ENCODE measurements at regions of chr14 and their contacts with region 1.

Region 1: DNA sequence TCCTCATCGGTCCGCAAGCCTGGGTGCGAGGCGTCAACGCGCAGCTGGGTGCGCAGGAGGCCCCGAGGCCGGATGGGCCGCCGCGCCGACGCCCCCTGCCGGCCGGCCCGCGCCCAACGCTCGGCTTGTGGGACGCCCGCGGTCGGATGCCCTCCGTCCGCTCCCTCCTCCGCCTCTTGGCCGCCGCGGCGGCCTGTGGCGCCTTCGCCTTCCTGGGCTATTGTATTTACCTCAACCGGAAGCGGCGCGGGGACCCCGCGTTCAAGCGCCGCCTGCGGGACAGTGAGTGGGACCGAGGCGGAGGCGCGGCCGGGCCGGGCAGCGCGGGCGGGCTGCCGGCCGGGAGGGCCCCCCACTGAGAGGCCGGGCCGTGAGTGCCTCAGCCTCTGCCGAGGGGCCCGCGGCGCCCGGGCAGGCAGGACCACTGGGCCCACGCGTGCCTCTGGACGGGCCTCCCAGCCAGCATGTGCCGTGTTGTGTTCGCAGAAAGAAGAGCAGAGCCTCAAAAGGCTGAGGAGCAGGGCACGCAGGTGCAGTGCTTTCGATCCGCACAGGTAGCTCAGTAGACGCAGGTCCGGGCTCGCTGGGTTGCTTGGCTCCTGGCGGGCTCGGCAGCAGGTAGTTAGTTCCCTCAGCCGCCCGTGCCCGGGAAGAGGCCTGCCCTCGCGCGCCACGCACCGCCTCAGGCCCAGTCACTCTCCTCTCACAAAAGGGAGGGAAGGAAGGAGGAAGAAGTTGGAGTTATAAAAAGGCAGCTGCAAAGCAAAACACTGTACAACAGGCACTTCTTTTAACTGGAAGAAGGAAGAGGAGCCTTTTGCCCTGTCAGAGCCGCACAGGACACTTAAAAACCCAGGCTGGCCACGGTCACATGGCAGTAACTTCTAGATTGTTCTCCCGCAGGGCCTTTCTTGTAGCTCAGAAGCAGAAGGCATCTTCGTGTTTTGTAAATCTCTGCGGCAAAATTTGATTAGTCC is at the start of gene TOMM20L:
- DNase-seq: peak; percentile 78 to 84
- ATAC-seq: peak; percentile 91 to 92 (median 92)
- H3K4me3 ChIP-seq: peak within 1 kb of the TSS; percentile 67
- H3K4me3 Mint-ChIP-seq: peak within 1 kb of the TSS; percentile 87
- H3K27ac ChIP-seq: peak within 1 kb of the TSS; percentile 81
- H3K27ac Mint-ChIP-seq: peak within 1 kb of the TSS; percentile 77 to 86
- H3K4me1 ChIP-seq: peaks cover 15% of the 10 kb centered on the region
- H3K4me1 Mint-ChIP-seq: peaks cover 5 to 17% of the 10 kb centered on the region in 2 donors
- H3K27me3 ChIP-seq: no peaks in the 10 kb centered on the region
- H3K27me3 Mint-ChIP-seq: no peaks in the 10 kb centered on the region
- CTCF ChIP-seq: peak; percentile 88
- total RNA-seq, gene TOMM20L: 0.66 TPM in 1 of 3 donors, not detected in the others

Region 2: DNA sequence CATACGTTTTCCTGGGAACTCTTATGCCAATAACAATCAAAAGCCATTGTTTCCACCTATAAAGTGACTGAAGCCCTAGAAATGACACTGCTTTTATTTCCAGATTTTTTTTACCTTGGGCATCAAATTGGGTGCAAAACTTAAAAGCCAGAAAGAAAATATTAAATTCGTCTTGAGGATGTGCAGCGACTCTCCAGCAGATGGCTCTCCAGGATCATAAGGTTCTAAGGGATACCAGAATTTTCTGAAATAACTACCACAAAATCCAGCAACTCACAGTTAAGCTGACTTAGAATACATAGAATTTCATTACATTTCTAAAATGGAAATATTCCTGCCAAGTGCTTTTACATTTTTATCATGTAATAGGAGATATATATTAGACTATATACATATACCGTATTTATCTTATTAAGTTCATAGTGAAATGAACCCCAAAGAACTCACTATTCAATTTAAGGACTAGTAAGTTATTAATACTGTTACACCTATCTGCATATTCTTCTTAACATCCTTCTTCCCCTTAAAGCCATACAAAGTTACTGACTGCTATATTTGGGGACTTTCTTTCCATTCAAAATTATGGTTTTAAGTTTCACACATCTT is 288.1 kb before region 1 on chr14:
- intact Hi-C with region 1: loop called (anchors 10 kb)
- DNase-seq: peak in 1 of 2 donors; percentile 70
- ATAC-seq: peak in 2 of 3 donors; percentile 54 to 55
- H3K4me3 ChIP-seq: no peak overlapping the region
- H3K4me3 Mint-ChIP-seq: no peak overlapping the region
- H3K27ac ChIP-seq: no peak overlapping the region
- H3K27ac Mint-ChIP-seq: no peak overlapping the region
- H3K4me1 ChIP-seq: no peaks in the 10 kb centered on the region
- H3K4me1 Mint-ChIP-seq: no peaks in the 10 kb centered on the region
- H3K27me3 ChIP-seq: no peaks in the 10 kb centered on the region
- H3K27me3 Mint-ChIP-seq: peaks cover 10 to 15% of the 10 kb centered on the region in 2 donors
- CTCF ChIP-seq: peak; percentile 62

Region 3: DNA sequence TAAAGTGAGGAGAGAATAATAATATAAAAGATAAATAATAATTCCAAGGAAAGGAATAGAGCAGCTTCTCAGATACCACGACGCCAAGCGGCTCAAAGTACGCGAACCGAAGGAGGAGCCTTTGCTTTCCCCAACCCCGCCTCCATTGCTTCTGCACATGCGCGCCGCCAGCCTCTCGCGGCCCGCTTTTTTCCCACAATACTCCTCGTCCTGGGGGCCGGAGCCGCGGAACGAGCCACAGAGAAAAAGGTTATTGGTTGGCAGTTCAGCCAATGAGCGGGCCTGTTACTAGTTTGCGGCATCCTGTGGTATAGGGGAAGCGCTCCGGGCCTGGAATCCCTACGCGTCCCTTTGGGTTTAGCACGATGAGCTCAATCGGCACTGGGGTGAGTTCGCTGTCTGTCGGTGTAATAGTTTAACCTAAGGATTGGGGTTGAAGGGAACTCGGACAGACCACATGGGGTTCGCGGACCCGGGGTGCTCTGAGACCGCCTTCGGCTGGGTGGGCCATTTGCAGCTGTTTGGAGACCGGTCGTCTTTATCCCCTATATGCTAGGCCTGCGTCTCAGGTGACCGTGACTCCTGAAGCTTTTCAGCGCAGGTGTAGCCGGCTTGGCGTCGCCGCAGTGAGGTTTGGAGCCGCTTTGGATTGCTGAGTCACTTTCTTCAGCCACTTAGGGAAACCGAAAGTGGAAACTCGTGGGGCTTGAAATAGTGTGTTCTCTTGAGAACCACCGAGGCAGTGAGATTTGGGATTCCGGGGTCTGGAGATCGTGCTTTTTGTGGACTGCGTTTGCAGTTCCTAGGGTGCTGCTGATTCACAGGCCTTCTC is 151.3 kb before region 1 on chr14 and contains the start of gene PSMA3:
- intact Hi-C with region 1: loop called (anchors 10 kb)
- DNase-seq: peak; percentile 97 to 98
- ATAC-seq: peak; percentile 88 to 97 (median 92)
- H3K4me3 ChIP-seq: peak within 1 kb of the TSS; percentile 88
- H3K4me3 Mint-ChIP-seq: peak within 1 kb of the TSS; percentile 99
- H3K27ac ChIP-seq: peak within 1 kb of the TSS; percentile 94
- H3K27ac Mint-ChIP-seq: peak within 1 kb of the TSS; percentile 95 to 99
- H3K4me1 ChIP-seq: peaks cover 5% of the 10 kb centered on the region
- H3K4me1 Mint-ChIP-seq: peaks cover 29 to 35% of the 10 kb centered on the region in 2 donors
- H3K27me3 ChIP-seq: no peaks in the 10 kb centered on the region
- H3K27me3 Mint-ChIP-seq: no peaks in the 10 kb centered on the region
- CTCF ChIP-seq: no peak
- total RNA-seq, gene PSMA3: 107 to 120 (median 115) TPM

Region 4: DNA sequence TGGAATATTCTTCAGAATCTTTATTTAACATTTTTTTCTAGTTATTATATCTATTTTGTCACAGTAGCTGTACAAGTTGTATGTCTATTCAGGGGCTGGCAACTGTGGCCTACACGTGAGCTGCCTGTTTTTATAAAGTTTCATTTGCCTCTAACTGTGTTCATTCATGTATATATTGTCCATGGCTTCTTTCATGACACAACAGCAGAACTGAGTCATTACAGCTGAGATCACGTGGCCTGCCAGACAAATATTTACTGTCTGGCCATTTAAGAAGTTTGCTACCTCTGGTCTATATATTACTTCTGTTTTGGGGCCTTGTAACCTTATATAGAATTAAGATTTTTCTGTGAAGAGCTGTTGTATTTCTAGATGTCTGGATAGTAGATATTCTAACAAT is 69.3 kb after region 1 on chr14:
- intact Hi-C with region 1: no loop called
- DNase-seq: no peak
- ATAC-seq: no peak
- H3K4me3 ChIP-seq: no peak overlapping the region
- H3K4me3 Mint-ChIP-seq: no peak overlapping the region
- H3K27ac ChIP-seq: no peak overlapping the region
- H3K27ac Mint-ChIP-seq: no peak overlapping the region
- H3K4me1 ChIP-seq: no peaks in the 10 kb centered on the region
- H3K4me1 Mint-ChIP-seq: no peaks in the 10 kb centered on the region
- H3K27me3 ChIP-seq: no peaks in the 10 kb centered on the region
- H3K27me3 Mint-ChIP-seq: no peaks in the 10 kb centered on the region
- CTCF ChIP-seq: no peak

Region 5: DNA sequence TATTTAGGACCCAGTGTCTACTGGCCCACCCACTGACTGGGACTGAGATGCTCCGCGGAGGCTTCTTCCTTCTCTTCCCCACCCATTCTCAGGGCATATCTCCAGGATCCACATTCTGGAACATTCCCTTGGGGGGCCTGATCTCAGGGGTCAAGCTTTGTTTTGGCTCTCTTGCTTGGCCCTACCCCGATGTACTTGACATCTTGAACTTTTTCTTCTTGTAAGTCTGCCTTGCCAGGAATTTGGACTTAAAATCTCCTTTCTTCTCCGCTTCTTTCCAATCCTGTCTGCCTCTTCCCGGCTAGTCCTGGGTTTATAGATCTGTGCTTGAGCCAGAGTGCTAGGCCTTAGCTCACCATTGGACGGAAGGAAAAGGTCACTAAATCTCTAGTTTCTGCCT is 263.7 kb after region 1 on chr14:
- intact Hi-C with region 1: no loop called
- DNase-seq: no peak
- ATAC-seq: no peak
- H3K4me3 ChIP-seq: no peak overlapping the region
- H3K4me3 Mint-ChIP-seq: no peak overlapping the region
- H3K27ac ChIP-seq: no peak overlapping the region
- H3K27ac Mint-ChIP-seq: no peak overlapping the region
- H3K4me1 ChIP-seq: no peaks in the 10 kb centered on the region
- H3K4me1 Mint-ChIP-seq: no peaks in the 10 kb centered on the region
- H3K27me3 ChIP-seq: no peaks in the 10 kb centered on the region
- H3K27me3 Mint-ChIP-seq: peaks cover 0 to 16% of the 10 kb centered on the region in 2 donors
- CTCF ChIP-seq: no peak